B cell (primary cell): ENCODE measurements at regions of chr1 and their contacts with region 1.

Region 1: GRCh38 chr1:198749279-198749678 is 110.4 kb downstream of the PTPRC start:
- DNase-seq: no peak
- ATAC-seq: no peak
- H3K4me3 ChIP-seq: no peak overlapping the region
- H3K4me3 Mint-ChIP-seq: no peak overlapping the region
- H3K27ac ChIP-seq: no peak overlapping the region
- H3K27ac Mint-ChIP-seq: no peak overlapping the region
- H3K4me1 ChIP-seq: no peaks in the 10 kb centered on the region
- H3K4me1 Mint-ChIP-seq: no peaks in the 10 kb centered on the region
- H3K27me3 ChIP-seq: no peaks in the 10 kb centered on the region
- H3K27me3 Mint-ChIP-seq: no peaks in the 10 kb centered on the region
- CTCF ChIP-seq: no peak

Region 2: GRCh38 chr1:198708761-198709525 is 40.3 kb before region 1 on chr1:
- CTCF ChIA-PET with region 1: no interaction called
- POLR2A ChIA-PET with region 1: no interaction called
- intact Hi-C with region 1: loop called (anchors 5 kb)
- DNase-seq: no peak
- ATAC-seq: no peak
- H3K4me3 ChIP-seq: no peak overlapping the region
- H3K4me3 Mint-ChIP-seq: no peak overlapping the region
- H3K27ac ChIP-seq: no peak overlapping the region
- H3K27ac Mint-ChIP-seq: no peak overlapping the region
- H3K4me1 ChIP-seq: no peaks in the 10 kb centered on the region
- H3K4me1 Mint-ChIP-seq: peaks cover 2% of the 10 kb centered on the region
- H3K27me3 ChIP-seq: no peaks in the 10 kb centered on the region
- H3K27me3 Mint-ChIP-seq: no peaks in the 10 kb centered on the region
- CTCF ChIP-seq: no peak

Region 3: GRCh38 chr1:198734323-198735008 is 14.8 kb before region 1 on chr1:
- CTCF ChIA-PET with region 1: no interaction called
- POLR2A ChIA-PET with region 1: no interaction called
- intact Hi-C with region 1: loop called (anchors 2 kb)
- DNase-seq: no peak
- ATAC-seq: no peak
- H3K4me3 ChIP-seq: no peak overlapping the region
- H3K4me3 Mint-ChIP-seq: no peak overlapping the region
- H3K27ac ChIP-seq: peak overlapping the region in 1 of 2 donors; percentile 34
- H3K27ac Mint-ChIP-seq: no peak overlapping the region
- H3K4me1 ChIP-seq: no peaks in the 10 kb centered on the region
- H3K4me1 Mint-ChIP-seq: peaks cover 10% of the 10 kb centered on the region
- H3K27me3 ChIP-seq: no peaks in the 10 kb centered on the region
- H3K27me3 Mint-ChIP-seq: no peaks in the 10 kb centered on the region
- CTCF ChIP-seq: no peak

Region 4: DNA sequence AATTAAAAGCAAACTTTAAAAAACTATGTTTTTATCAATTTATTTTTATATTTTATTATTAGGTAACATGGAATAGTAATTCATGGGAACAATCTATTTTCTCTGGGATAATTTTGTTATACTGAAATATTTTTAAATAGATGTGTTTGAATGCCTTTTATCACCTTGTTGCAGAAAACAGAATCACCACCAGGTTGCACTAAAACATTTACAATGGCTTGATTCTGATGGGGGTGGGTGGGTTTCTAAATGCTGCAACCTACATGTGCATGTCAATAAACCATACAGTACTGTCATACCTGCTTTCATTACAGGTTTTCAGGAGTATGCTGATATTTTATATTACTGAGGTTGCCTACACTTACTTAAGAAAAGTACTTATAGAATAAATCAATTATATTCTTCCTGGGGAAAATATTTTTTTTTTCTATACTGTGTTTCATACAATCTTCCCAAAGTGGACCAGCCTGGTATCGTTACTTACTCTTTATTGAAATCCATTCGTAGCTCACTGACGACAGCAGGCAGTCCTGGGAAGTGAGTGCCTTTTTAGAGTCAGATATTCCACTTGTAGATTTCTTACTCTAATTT is 22.4 kb after region 1 on chr1:
- CTCF ChIA-PET with region 1: no interaction called
- POLR2A ChIA-PET with region 1: no interaction called
- intact Hi-C with region 1: no loop called
- DNase-seq: peak; percentile 50
- ATAC-seq: no peak
- H3K4me3 ChIP-seq: no peak overlapping the region
- H3K4me3 Mint-ChIP-seq: no peak overlapping the region
- H3K27ac ChIP-seq: no peak overlapping the region
- H3K27ac Mint-ChIP-seq: no peak overlapping the region
- H3K4me1 ChIP-seq: no peaks in the 10 kb centered on the region
- H3K4me1 Mint-ChIP-seq: no peaks in the 10 kb centered on the region
- H3K27me3 ChIP-seq: no peaks in the 10 kb centered on the region
- H3K27me3 Mint-ChIP-seq: no peaks in the 10 kb centered on the region
- CTCF ChIP-seq: peak; percentile 71

Region 5: GRCh38 chr1:199113265-199113869 is 364.1 kb after region 1 on chr1:
- CTCF ChIA-PET with region 1: interaction called, 7 read pairs
- POLR2A ChIA-PET with region 1: no interaction called
- intact Hi-C with region 1: loop called (anchors 5 kb)
- DNase-seq: peak; percentile 66
- ATAC-seq: peak; percentile 41
- H3K4me3 ChIP-seq: no peak overlapping the region
- H3K4me3 Mint-ChIP-seq: no peak overlapping the region
- H3K27ac ChIP-seq: no peak overlapping the region
- H3K27ac Mint-ChIP-seq: no peak overlapping the region
- H3K4me1 ChIP-seq: peaks cover 3 to 6% of the 10 kb centered on the region in 2 donors
- H3K4me1 Mint-ChIP-seq: peaks cover 7% of the 10 kb centered on the region
- H3K27me3 ChIP-seq: no peaks in the 10 kb centered on the region
- H3K27me3 Mint-ChIP-seq: no peaks in the 10 kb centered on the region
- CTCF ChIP-seq: peak; percentile 66